Heart right ventricle (tissue), 16 donors: ENCODE measurements at regions of chrX and their contacts with region 1.

Region 1: GRCh38 chrX:31459361-31459760 is 387.5 kb upstream of the FTHL17 start:
- DNase-seq: no peak
- ATAC-seq: no peak
- H3K4me3 ChIP-seq: no peak overlapping the region
- H3K27ac ChIP-seq: no peak overlapping the region
- H3K4me1 ChIP-seq: peaks cover 0 to 4% (median 0%) of the 10 kb centered on the region in 9 donors
- H3K27me3 ChIP-seq: no peaks in the 10 kb centered on the region
- CTCF ChIP-seq: no peak

Region 2: DNA sequence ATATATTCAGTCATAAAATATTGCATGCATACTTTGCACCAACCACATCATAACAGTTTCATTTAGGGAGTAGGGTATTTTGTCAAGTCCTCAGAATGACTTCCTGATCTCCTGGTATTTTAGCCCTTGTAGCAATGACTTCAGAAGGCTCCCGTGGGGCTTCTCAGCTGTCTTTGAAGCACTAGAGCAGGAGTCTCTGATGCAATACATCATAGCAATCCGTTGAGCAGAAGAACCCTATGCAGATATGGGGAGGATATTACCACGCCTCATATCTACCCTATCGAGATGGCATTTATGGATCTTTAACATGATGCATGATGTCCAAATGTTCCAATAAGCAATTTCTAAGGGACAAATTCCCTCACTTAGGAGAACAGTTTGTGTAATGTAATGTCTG is 13.8 kb before region 1 on chrX:
- intact Hi-C with region 1: loop called in 1 of 10 experiments (anchors 1 kb)
- DNase-seq: peak in 1 of 2 donors; percentile 16
- ATAC-seq: no peak
- H3K4me3 ChIP-seq: no peak overlapping the region
- H3K27ac ChIP-seq: no peak overlapping the region
- H3K4me1 ChIP-seq: no peaks in the 10 kb centered on the region
- H3K27me3 ChIP-seq: no peaks in the 10 kb centered on the region
- CTCF ChIP-seq: no peak

Region 3: GRCh38 chrX:32185160-32185559 is 725.8 kb after region 1 on chrX:
- intact Hi-C with region 1: no loop called
- DNase-seq: no peak
- ATAC-seq: no peak
- H3K4me3 ChIP-seq: no peak overlapping the region
- H3K27ac ChIP-seq: no peak overlapping the region
- H3K4me1 ChIP-seq: no peaks in the 10 kb centered on the region
- H3K27me3 ChIP-seq: no peaks in the 10 kb centered on the region
- CTCF ChIP-seq: no peak